Activated T-helper 1 cell treated with anti-CD3 and anti-CD28 coated beads, Interleukin-12 subunit alpha, Interleukin-12 subunit beta, Interleukin-2, Interleukin-4 antibody, amounts not matched to agents 30 ng/mL and 10 ng/mL and 1 ng/mL, durations not matched to agents 14 hours and 24 hours and 36 hours (primary cell): ENCODE measurements at regions of chr1 and their contacts with region 1.

Region 1: GRCh38 chr1:59494145-59494833 is 197.4 kb downstream of the FGGY start:
- DNase-seq: no peak
- H3K4me3 Mint-ChIP-seq: no peak overlapping the region
- H3K27ac Mint-ChIP-seq: peak overlapping the region; percentile 86
- H3K4me1 Mint-ChIP-seq: peaks cover 15% of the 10 kb centered on the region
- H3K27me3 Mint-ChIP-seq: peaks cover 3% of the 10 kb centered on the region

Region 2: DNA sequence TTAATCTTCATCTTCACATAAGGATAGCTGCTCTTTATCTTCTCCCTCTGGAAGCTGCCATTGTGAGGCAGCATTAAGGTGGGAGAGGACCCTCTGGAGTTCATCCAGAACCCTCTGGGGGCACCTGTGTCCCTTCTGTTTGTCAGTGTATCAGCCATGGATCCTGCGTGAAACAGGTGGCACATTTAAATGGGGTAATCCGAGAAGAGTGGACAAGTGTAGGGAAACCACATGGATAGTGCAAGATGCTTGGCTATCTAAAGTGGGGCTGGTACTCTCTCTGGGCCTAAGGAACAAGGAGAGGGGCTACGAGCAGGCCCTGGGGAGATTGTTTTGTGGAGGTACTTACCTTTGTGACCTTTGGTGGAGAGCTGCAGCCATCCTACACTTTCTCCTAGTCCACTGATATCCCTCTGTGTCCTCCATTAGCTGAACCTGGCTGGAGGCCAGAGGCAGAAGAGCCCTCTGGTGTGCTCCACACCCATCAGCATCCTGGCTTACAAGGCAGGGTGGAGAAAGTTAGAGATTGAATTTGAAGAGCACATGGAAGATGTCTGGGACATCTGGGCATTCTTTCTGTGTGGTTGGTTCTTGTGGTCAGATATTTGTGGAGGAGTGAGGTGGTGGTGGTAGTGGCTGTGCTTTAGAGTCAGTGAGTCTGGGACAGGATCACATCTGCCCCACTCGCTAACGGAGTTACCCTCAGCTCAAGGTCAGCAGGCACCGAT is 79.7 kb before region 1 on chr1:
- intact Hi-C with region 1: no loop called
- DNase-seq: no peak
- H3K4me3 Mint-ChIP-seq: no peak overlapping the region
- H3K27ac Mint-ChIP-seq: no peak overlapping the region
- H3K4me1 Mint-ChIP-seq: no peaks in the 10 kb centered on the region
- H3K27me3 Mint-ChIP-seq: no peaks in the 10 kb centered on the region

Region 3: DNA sequence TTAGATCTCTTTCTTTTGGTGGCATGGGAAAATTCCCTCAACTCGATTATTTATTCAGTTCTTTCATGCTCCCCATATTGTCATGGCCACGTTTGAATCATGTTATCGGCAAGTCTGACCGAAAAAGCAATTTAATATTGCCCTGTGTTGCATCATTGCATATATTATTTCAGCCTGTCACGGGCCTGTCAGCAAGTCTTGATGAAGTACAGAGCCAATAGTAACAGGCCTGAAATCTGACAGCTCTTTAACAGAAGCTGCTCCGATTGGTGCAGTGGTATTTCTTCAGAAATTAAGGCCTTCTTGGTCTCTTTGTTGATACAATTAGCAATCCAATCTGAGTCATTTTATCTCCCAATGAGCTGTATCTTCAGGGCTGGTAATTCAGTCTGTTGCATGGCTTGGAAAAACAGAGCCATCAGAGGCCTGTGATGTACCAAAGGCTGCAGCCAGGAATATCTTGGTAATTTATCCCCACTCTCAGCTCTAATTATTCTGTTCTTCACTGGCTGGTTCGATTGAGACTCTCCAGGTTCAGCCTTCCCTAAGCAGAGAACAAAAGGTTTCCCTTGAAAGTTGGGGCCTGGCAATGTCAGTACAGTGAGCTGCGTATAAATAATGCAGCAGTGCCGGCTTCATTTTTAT is 47.9 kb before region 1 on chr1:
- intact Hi-C with region 1: loop called (anchors 1 kb)
- DNase-seq: no peak
- H3K4me3 Mint-ChIP-seq: no peak overlapping the region
- H3K27ac Mint-ChIP-seq: no peak overlapping the region
- H3K4me1 Mint-ChIP-seq: peaks cover 21% of the 10 kb centered on the region
- H3K27me3 Mint-ChIP-seq: no peaks in the 10 kb centered on the region